Colonic mucosa (tissue), 4 donors: ENCODE measurements at regions of chr2 and their contacts with region 1.

Region 1: DNA sequence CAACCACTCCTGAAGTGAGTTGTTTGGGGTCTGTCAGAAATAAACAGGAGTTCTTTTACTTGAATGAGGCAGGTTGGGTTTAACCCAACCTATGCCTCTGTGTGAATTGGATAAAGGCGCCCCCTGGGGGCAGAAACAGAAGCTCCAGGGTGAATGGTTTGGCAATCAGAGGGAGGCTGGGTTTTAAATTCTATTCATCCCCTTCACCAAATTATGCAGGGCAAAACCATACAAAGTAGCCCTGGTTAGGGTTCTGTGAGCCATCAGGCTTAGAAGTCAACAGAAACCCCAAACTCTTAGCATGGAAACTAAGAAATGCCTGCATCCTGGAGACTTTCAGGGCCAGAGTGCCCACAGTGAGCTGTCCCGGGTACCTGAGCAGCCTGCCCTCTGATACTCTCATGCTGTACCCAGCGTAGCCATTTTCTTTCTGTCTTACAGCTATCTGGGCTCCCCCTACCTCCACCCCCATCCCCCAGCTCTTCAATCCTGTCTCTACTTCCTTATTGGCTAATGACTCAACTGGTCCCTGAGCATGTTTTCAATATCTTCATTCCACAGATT is 241.5 kb downstream of the ICOS start:
- DNase-seq: peak; percentile 66
- H3K4me3 ChIP-seq: no peak overlapping the region
- H3K27ac ChIP-seq: no peak overlapping the region
- H3K4me1 ChIP-seq: no peaks in the 10 kb centered on the region
- H3K27me3 ChIP-seq: no peaks in the 10 kb centered on the region
- CTCF ChIP-seq: peak; percentile 54

Region 2: GRCh38 chr2:204019572-204020501 is 158.2 kb before region 1 on chr2:
- intact Hi-C with region 1: loop called (anchors 10 kb)
- DNase-seq: no peak
- H3K4me3 ChIP-seq: no peak overlapping the region
- H3K27ac ChIP-seq: no peak overlapping the region
- H3K4me1 ChIP-seq: no peaks in the 10 kb centered on the region
- H3K27me3 ChIP-seq: no peaks in the 10 kb centered on the region
- CTCF ChIP-seq: no peak

Region 3: DNA sequence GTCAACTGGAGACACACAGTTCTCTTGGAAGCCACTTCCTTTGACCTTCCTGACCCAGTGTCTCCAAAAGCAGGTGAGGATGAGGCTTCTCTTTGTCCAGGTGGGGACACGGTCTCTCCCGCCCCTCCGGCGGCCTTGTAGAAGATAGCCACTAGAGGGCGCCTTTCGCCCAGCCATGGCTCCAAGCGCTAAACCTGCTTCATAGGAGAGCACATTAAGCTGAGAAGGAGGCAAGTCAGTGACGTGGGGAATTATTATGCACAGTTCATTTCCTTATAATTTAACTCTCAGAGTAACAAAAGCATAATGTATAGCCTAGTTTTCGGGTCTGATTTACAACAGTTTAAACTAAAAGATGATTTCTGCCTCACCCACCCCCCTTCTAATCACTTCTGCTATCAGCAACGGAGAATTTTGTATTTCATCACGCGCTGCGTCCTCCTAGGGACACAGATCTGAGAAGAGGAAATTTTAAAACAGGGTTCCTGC is 32.8 kb before region 1 on chr2:
- intact Hi-C with region 1: loop called (anchors 2 kb)
- DNase-seq: peak; percentile 84
- H3K4me3 ChIP-seq: peak overlapping the region; percentile 31
- H3K27ac ChIP-seq: no peak overlapping the region
- H3K4me1 ChIP-seq: no peaks in the 10 kb centered on the region
- H3K27me3 ChIP-seq: no peaks in the 10 kb centered on the region
- CTCF ChIP-seq: peak; percentile 95